AG04450 (cell line): ENCODE measurements at regions of chr22 and their contacts with region 1.

Region 1: GRCh38 chr22:35191412-35191811 is 65.9 kb upstream of the HMGXB4 start:
- DNase-seq: no peak
- H3K4me3 ChIP-seq: no peak overlapping the region
- H3K27ac ChIP-seq: no peak overlapping the region
- H3K27me3 ChIP-seq: no peaks in the 10 kb centered on the region
- CTCF ChIP-seq: no peak

Region 2: GRCh38 chr22:34414484-34415440 is 776.6 kb before region 1 on chr22:
- CTCF ChIA-PET with region 1: interaction called, 11 read pairs
- POLR2A ChIA-PET with region 1: no interaction called
- DNase-seq: no peak
- H3K4me3 ChIP-seq: no peak overlapping the region
- H3K27ac ChIP-seq: no peak overlapping the region
- H3K27me3 ChIP-seq: no peaks in the 10 kb centered on the region
- CTCF ChIP-seq: no peak